ENCODE measurements at regions of chr1 and their contacts with region 1.

Region 1: DNA sequence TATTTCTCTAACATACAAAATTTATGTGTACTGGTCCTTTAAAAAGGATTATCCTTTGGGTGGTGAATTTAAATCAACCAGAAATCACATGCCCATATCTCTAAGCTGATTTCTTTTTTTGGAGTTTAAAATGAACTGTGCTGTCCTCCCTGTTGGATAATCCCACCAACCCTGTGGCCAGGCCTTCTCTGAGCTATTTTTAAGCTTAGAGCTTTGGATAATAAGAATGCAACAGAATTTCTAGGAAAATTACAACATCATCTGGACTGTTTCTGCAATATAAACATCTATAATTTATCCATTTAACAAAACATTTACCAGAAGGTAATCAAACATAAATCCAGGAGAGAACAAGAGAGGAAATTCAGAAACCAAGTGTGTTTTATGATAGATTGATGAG is 88.3 kb downstream of the LRRC40 start:
- DNase-seq: no peak
- H3K4me3 ChIP-seq: no peak overlapping the region
- H3K27ac ChIP-seq: no peak overlapping the region
- H3K4me1 ChIP-seq: no peaks in the 10 kb centered on the region
- H3K27me3 ChIP-seq: no peaks in the 10 kb centered on the region
- CTCF ChIP-seq: no peak
- EP300 ChIP-seq: no peak
- POLR2A ChIP-seq: no peak

Region 2: DNA sequence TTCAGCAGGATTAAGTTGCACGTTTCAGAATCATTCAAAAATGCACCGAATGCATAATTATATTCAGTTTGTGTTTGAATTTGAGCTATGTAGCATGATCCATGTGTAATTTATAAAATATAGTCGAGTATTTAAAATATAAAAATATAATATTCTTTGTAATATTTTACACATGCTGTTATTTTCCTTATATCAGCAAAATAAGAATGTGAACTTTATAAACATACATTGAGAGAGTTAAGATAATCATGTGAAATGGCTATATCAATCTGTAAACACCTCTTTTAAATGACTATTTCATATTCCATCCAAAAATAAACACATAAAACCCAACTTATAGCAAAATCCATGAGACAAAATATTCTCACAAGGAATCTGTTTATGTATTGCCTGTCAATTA is 245.6 kb before region 1 on chr1:
- intact Hi-C with region 1: no loop called
- DNase-seq: no peak
- H3K4me3 ChIP-seq: no peak overlapping the region
- H3K27ac ChIP-seq: no peak overlapping the region
- H3K4me1 ChIP-seq: no peaks in the 10 kb centered on the region
- H3K27me3 ChIP-seq: no peaks in the 10 kb centered on the region
- CTCF ChIP-seq: no peak
- EP300 ChIP-seq: no peak
- POLR2A ChIP-seq: no peak

Region 3: GRCh38 chr1:71276466-71276865 is 1159.4 kb after region 1 on chr1:
- intact Hi-C with region 1: loop called in 1 of 4 experiments (anchors 5 kb)
- DNase-seq: no peak
- H3K4me3 ChIP-seq: no peak overlapping the region
- H3K27ac ChIP-seq: no peak overlapping the region
- H3K4me1 ChIP-seq: no peaks in the 10 kb centered on the region
- H3K27me3 ChIP-seq: no peaks in the 10 kb centered on the region
- CTCF ChIP-seq: no peak
- EP300 ChIP-seq: no peak
- POLR2A ChIP-seq: no peak